H1 (cell line): ENCODE measurements at regions of chrX and their contacts with region 1.

Region 1: DNA sequence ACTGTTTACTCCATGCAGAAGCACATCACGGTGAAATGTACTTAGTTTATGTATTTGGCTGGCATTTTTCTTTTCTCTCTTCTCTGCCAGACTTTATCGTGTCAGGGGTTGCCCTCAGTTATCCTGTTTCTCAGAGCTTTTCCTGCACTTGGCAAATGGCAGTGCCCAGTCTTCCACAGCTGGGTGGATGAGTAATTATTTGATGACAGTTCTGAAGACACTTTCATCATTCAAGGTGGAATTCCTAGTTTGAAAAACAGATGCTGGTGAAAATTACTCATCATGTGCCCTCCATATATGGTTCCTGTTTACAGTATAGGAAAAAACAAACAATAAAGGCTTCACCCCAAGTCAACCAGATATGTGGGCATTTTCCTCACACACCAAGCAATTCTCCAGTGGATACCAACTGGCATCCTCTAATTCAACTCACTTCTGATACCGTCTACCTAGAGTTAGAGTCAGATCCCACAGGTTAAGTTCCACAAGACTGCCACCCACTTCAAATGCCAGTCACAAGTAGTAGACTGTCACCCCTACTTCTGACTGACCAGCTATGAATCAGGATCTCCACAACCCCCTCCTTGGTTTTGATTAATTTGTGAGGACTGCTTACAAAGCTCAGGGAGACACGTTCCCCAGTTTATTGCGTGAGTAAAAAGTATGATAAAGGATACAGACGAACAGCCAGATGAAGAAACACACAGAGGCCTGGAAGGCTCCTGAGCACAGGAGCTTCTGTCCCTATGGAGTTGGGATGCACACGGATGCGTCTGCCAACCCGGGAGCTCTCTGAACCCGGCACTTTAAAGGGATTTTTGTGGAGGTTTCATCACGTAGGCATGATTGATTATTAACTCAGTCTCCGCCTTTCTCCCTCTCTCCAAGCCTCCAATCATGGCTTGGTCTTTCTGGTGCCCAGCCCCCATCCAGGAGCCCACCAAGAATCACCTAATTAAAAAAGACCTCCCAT is 72.9 kb downstream of the CLDN34 start:
- DNase-seq: no peak
- H3K4me3 ChIP-seq: peak overlapping the region in 1 of 4 experiments; percentile 37; a peak in 1 of 8 replicates
- H3K27ac ChIP-seq: peak overlapping the region; percentile 55; the same call in 1 of the 2 replicates
- H3K4me1 ChIP-seq: peaks cover 0 to 12% (median 5%) of the 10 kb centered on the region in 4 experiments; a peak in 3 of 7 replicates
- H3K27me3 ChIP-seq: no peaks in the 10 kb centered on the region
- CTCF ChIP-seq: no peak
- EP300 ChIP-seq: no peak
- POLR2A ChIP-seq: no peak
- RAD21 ChIP-seq: no peak

Region 2: DNA sequence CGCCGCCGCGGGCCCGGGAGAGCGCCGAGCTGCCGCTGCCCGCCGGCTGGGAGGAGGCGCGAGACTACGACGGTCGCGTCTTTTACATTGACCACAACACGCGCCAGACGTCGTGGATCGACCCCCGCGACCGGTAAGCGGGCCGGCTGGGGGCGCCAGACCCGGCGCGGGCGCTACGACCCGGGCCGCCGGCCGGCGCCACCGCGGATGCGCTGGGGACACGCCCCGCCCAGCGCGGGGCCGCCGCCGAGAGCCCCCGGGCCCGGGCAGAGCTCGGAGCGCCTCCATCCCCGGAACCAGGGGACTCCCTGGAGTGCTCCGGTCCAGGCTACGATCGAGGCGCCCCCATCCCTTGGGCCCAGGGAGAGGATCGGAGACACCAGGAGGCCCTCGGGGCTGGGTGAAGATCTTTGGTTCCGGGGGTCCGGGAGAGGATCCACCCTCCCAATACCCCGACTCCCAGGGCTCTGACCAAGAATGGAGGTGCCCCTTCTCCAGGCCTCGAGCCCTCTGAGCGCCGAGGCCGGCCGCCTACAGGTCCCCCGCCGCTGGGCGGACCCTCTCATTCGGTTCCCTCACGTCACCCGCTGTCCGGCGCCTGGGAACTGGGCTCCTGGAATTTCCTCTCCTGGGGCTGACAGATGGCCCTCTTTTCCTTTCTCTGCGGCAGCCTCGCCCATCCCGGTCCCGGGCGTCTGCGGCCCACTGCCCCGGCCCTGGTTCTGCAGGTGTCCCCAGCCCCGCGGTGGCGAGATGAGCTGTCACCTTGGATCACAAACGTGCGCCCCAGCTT is 24.2 kb before region 1 on chrX:
- CTCF ChIA-PET with region 1: no interaction called
- POLR2A ChIA-PET with region 1: interaction called, 12 read pairs
- DNase-seq: peak in 1 of 2 experiments; percentile 51
- H3K4me3 ChIP-seq: peak overlapping the region; percentile 47 to 68 (median 58)
- H3K27ac ChIP-seq: no peak overlapping the region
- H3K4me1 ChIP-seq: peaks cover 0 to 17% (median 7%) of the 10 kb centered on the region in 4 experiments; a peak in 5 of 7 replicates
- H3K27me3 ChIP-seq: no peaks in the 10 kb centered on the region
- CTCF ChIP-seq: no peak
- EP300 ChIP-seq: no peak
- POLR2A ChIP-seq: no peak
- RAD21 ChIP-seq: no peak